ENCODE measurements at regions of chr16 and their contacts with region 1.

Region 1: DNA sequence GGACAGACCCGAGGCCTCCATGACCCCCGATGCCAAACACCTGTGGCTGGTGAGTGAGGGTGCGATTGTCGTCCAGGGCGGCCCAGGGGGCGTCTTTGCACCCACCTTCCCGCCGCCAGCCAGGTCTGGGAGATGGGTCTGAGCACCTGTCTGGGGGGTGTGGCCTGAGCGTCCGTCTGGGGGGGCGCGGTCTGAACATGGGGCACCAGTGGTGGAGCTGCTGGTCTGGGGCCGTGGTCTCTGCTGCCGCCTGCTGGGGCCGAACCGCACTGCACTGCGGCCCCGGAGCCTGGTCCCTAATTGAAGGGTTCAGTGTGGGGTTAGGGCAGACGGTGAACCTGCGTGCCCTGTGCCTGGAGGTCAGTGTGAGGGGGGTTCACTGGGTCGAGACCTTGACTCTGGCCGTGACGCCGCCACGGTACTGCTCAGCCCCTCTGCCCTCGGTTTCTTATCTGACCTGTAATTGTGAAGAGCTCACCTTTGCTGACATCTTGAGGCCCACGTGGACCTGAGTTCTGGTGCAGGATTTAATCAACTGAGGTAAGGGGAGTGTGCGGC is 12.6 kb upstream of the TCF25 start:
- DNase-seq: peak; percentile 85
- ATAC-seq: peak; percentile 94
- H3K4me3 Mint-ChIP-seq: no peak overlapping the region
- H3K27ac Mint-ChIP-seq: no peak overlapping the region
- H3K4me1 Mint-ChIP-seq: peaks cover 31% of the 10 kb centered on the region
- H3K27me3 Mint-ChIP-seq: no peaks in the 10 kb centered on the region
- CTCF ChIP-seq: peak; percentile 99

Region 2: DNA sequence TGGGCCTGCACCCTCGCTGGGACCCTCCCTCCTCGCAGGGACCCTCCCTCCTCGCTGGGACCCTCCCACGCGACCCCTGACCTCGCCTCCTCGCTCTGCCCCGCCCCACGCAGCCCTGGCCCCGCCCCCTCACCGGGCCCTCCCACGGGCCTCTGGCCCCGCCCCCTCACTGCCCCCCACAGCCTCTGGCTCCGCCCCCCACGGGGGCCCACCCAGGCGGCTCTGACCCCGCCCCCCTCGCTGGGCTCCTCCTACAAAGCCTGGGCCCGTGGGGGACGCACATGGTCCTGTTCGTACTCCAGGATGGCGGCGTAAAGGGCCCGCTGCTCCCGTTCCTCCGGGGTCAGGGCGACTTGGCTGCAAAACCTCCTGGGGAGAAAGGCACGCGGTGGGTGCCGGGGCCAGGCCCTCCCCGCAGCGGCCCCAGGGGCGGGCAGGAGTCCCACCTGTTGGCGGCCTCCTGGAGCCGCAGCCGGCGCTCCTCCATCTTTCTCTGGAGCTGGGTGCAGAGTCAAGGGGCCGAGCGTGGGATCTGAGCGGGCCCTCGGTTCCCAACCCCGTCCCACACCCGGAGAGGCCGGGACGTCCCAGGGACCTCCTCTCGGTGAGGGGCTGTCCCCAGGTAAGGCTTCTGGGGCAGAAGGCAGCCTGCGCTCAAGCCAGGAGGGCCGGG is 149.1 kb before region 1 on chr16:
- CTCF ChIA-PET with region 1: interaction called, 46 read pairs
- POLR2A ChIA-PET with region 1: no interaction called
- intact Hi-C with region 1: no loop called
- DNase-seq: peak; percentile 81
- ATAC-seq: peak; percentile 92
- H3K4me3 Mint-ChIP-seq: peak overlapping the region; percentile 78
- H3K27ac Mint-ChIP-seq: peak overlapping the region; percentile 57
- H3K4me1 Mint-ChIP-seq: peaks cover 6% of the 10 kb centered on the region
- H3K27me3 Mint-ChIP-seq: no peaks in the 10 kb centered on the region
- CTCF ChIP-seq: no peak

Region 3: GRCh38 chr16:89785523-89786155 is 75.2 kb before region 1 on chr16:
- CTCF ChIA-PET with region 1: interaction called, 8 read pairs
- POLR2A ChIA-PET with region 1: no interaction called
- intact Hi-C with region 1: loop called (anchors 2 kb)
- DNase-seq: peak; percentile 6
- ATAC-seq: peak; percentile 13
- H3K4me3 Mint-ChIP-seq: no peak overlapping the region
- H3K27ac Mint-ChIP-seq: no peak overlapping the region
- H3K4me1 Mint-ChIP-seq: peaks cover 24% of the 10 kb centered on the region
- H3K27me3 Mint-ChIP-seq: no peaks in the 10 kb centered on the region
- CTCF ChIP-seq: no peak

Region 4: GRCh38 chr16:89815639-89816348 is 45.0 kb before region 1 on chr16:
- CTCF ChIA-PET with region 1: interaction called, 14 read pairs
- POLR2A ChIA-PET with region 1: interaction called, 3 read pairs
- intact Hi-C with region 1: loop called (anchors 10 kb)
- DNase-seq: peak; percentile 28
- ATAC-seq: peak; percentile 29
- H3K4me3 Mint-ChIP-seq: peak overlapping the region; percentile 88
- H3K27ac Mint-ChIP-seq: peak overlapping the region; percentile 61
- H3K4me1 Mint-ChIP-seq: peaks cover 32% of the 10 kb centered on the region
- H3K27me3 Mint-ChIP-seq: no peaks in the 10 kb centered on the region
- CTCF ChIP-seq: no peak

Region 5: GRCh38 chr16:89880477-89881367 is 19.9 kb after region 1 on chr16:
- CTCF ChIA-PET with region 1: interaction called, 10 read pairs
- POLR2A ChIA-PET with region 1: no interaction called
- intact Hi-C with region 1: no loop called
- DNase-seq: no peak
- ATAC-seq: no peak
- H3K4me3 Mint-ChIP-seq: no peak overlapping the region
- H3K27ac Mint-ChIP-seq: no peak overlapping the region
- H3K4me1 Mint-ChIP-seq: peaks cover 4% of the 10 kb centered on the region
- H3K27me3 Mint-ChIP-seq: no peaks in the 10 kb centered on the region
- CTCF ChIP-seq: no peak